ENCODE measurements at regions of chr19 and their contacts with region 1.

Region 1: DNA sequence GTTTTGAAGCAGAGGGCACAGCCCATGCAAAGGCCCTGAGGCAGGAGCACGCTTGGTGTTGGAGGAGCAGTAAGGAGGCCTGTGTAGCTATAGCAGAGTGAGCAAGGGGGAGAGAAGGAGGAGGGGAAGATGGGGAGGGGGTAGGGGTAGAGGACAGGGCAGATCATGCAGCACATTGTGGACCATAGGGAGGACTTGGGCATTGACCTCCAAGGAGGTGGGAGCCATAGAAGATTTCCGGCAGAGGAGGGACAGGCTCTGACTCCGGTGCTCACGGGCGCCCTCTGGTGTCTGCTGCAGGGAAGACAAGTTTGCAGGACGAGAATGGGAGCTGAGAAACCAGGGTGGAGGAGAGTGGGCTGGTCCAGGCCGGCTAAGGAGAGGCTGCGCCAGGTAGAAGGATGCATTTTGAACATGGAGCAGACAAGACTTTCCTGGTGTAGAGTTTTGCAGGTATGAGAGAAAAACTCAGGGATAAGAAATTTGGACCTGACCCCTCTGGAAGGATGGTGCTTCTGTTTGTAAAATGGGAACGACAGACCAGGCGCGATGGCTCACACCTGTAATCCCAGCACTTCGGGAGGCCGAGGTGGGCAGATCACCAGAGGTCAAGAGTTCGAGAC is 13.7 kb upstream of the CREB3L3 start:
- DNase-seq: peak; percentile 96
- H3K4me3 ChIP-seq: peak overlapping the region in 1 of 8 donors; percentile 24
- H3K27ac ChIP-seq: no peak overlapping the region
- H3K4me1 ChIP-seq: peaks cover 6 to 17% (median 11%) of the 10 kb centered on the region in 6 donors
- H3K27me3 ChIP-seq: peaks cover 0 to 10% (median 0%) of the 10 kb centered on the region in 7 donors
- CTCF ChIP-seq: peak; percentile 77 to 93 (median 85)
- POLR2A ChIP-seq: no peak

Region 2: DNA sequence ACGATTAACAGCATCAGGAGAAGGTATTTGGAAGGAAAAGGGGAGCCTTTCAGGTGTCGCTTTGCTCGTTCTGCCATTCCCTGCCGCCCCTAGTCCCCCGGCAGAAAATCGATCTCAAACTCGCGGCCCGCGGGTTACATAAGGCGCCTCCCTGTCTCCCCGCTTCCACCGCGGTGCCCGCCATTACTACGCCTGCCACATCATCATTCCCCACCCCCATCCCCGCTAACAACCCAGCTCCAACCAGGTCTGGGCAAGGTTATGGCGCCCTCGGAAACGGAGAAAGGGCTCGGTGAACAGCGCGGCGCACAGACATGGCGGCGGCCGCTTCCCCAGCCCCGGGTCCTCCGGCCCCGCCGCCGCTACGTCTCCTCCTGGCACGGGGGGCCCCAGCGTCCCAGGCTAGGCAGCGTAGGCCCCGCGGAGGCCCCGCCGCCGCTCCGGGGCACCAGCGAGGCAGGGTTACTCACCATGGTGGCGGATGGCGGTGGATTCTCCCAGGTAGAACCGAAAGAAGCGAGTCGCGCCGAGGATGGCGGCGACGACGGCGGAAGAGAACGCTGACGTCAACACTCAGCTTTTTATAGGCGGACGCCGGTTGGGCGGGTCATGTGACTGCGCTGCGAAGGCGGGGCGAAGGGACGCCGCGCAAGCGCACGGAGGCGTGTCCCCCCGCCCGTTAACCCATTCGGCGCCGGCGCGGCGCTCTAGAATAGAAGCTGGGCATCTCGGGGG is 154.7 kb before region 1 on chr19 and contains the start of gene EEF2:
- intact Hi-C with region 1: loop called (anchors 5 kb)
- DNase-seq: peak; percentile 96
- H3K4me3 ChIP-seq: peak within 1 kb of the TSS; percentile 70 to 90 (median 80)
- H3K27ac ChIP-seq: peak within 1 kb of the TSS; percentile 90 to 98 (median 94)
- H3K4me1 ChIP-seq: peaks cover 42 to 93% (median 79%) of the 10 kb centered on the region in 6 donors
- H3K27me3 ChIP-seq: no peaks in the 10 kb centered on the region
- CTCF ChIP-seq: peak in 2 of 11 experiments; percentile 2 to 19
- POLR2A ChIP-seq: peak; percentile 84 to 98 (median 98)
- total RNA-seq, gene EEF2: 1,078 to 1,961 (median 1,406) TPM

Region 3: GRCh38 chr19:4015705-4016402 is 123.9 kb before region 1 on chr19:
- intact Hi-C with region 1: no loop called
- DNase-seq: no peak
- H3K4me3 ChIP-seq: peak overlapping the region in 1 of 8 donors; percentile 29
- H3K27ac ChIP-seq: peak overlapping the region in 5 of 8 donors; percentile 17 to 63 (median 46)
- H3K4me1 ChIP-seq: peaks cover 5 to 86% (median 42%) of the 10 kb centered on the region in 6 donors
- H3K27me3 ChIP-seq: no peaks in the 10 kb centered on the region
- CTCF ChIP-seq: no peak
- POLR2A ChIP-seq: no peak

Region 4: GRCh38 chr19:4217429-4218264 is 77.9 kb after region 1 on chr19:
- intact Hi-C with region 1: no loop called
- DNase-seq: no peak
- H3K4me3 ChIP-seq: no peak overlapping the region
- H3K27ac ChIP-seq: no peak overlapping the region
- H3K4me1 ChIP-seq: no peaks in the 10 kb centered on the region
- H3K27me3 ChIP-seq: no peaks in the 10 kb centered on the region
- CTCF ChIP-seq: no peak
- POLR2A ChIP-seq: no peak

Measured in spleen (tissue), 13 donors.